Esophagus squamous epithelium (tissue), 5 donors: ENCODE measurements at regions of chr11 and their contacts with region 1.

Region 1: GRCh38 chr11:117134431-117134830 is 9.7 kb upstream of the PAFAH1B2 start:
- DNase-seq: no peak
- H3K4me3 ChIP-seq: no peak overlapping the region
- H3K27ac ChIP-seq: no peak overlapping the region
- H3K4me1 ChIP-seq: no peaks in the 10 kb centered on the region
- H3K27me3 ChIP-seq: peaks cover 0 to 5% (median 0%) of the 10 kb centered on the region in 4 donors
- CTCF ChIP-seq: no peak
- POLR2A ChIP-seq: no peak

Region 2: GRCh38 chr11:117205211-117205818 is 70.9 kb after region 1 on chr11:
- intact Hi-C with region 1: loop called (anchors 5 kb)
- DNase-seq: no peak
- H3K4me3 ChIP-seq: peak overlapping the region in 1 of 4 donors; percentile 3
- H3K27ac ChIP-seq: peak overlapping the region; percentile 34 to 89 (median 85)
- H3K4me1 ChIP-seq: peaks cover 0 to 27% (median 0%) of the 10 kb centered on the region in 3 donors
- H3K27me3 ChIP-seq: no peaks in the 10 kb centered on the region
- CTCF ChIP-seq: no peak
- POLR2A ChIP-seq: no peak